ENCODE measurements at regions of chr17 and their contacts with region 1.

Region 1: DNA sequence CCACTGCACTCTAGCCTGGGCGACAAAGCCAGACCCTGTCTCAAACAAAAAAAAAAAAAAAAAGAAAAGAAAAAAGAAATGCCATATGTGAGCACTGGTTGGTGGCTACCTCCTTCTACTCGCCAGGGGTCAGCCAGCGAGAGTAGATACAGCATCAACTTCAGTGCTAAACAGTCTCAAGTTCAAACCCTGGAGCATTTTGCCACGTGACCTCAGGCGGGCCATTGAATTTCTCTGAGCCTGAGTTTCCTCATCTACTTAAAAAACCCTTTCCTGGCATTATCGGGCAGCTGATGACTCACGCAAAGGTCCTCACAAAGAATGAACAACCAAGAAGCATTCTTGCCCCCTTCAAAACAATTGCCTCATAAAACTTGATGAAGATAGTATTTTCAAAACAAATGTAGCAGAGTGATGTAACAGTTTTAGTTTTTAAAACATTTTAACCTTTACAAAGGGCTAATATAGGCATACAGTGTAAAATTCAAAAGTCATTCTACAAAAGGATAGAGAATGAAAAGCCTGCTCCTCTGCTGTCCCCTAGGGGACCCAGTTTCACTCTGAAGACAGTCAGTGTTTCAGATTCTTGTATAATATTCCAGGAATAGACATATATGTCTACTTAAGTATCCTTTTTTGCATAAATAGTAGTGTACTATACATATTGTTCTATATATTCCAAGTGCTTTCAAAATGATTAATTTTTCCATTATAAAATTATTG is 28.4 kb downstream of the DNAH2 start:
- DNase-seq: no peak
- H3K4me3 ChIP-seq: no peak overlapping the region
- H3K27ac ChIP-seq: peak overlapping the region; percentile 13 to 61; a peak in 3 of 4 replicates
- H3K4me1 ChIP-seq: peaks cover 6 to 29% of the 10 kb centered on the region in 2 experiments; a peak in 2 of 4 replicates
- H3K27me3 ChIP-seq: no peaks in the 10 kb centered on the region
- CTCF ChIP-seq: peak; percentile 42; the same call in 1 of the 2 replicates
- EP300 ChIP-seq: no peak
- RAD21 ChIP-seq: no peak

Region 2: GRCh38 chr17:7583253-7584109 is 162.4 kb before region 1 on chr17 and contains the start of gene MPDU1:
- CTCF ChIA-PET with region 1: no interaction called
- POLR2A ChIA-PET with region 1: no interaction called
- DNase-seq: peak; percentile 93
- H3K4me3 ChIP-seq: peak within 1 kb of the TSS; percentile 65 to 73
- H3K27ac ChIP-seq: peak within 1 kb of the TSS; percentile 97 to 98
- H3K4me1 ChIP-seq: peaks cover 22 to 32% of the 10 kb centered on the region in 2 experiments; a peak in 3 of 4 replicates
- H3K27me3 ChIP-seq: no peaks in the 10 kb centered on the region
- CTCF ChIP-seq: no peak
- EP300 ChIP-seq: no peak
- RAD21 ChIP-seq: no peak
- polyA plus RNA-seq, gene MPDU1: 126 and 142 TPM in 2 replicates

Region 3: GRCh38 chr17:7729816-7730215 is 16.1 kb before region 1 on chr17:
- CTCF ChIA-PET with region 1: interaction called, 20 read pairs
- POLR2A ChIA-PET with region 1: no interaction called
- DNase-seq: no peak
- H3K4me3 ChIP-seq: no peak overlapping the region
- H3K27ac ChIP-seq: no peak overlapping the region
- H3K4me1 ChIP-seq: no peaks in the 10 kb centered on the region
- H3K27me3 ChIP-seq: no peaks in the 10 kb centered on the region
- CTCF ChIP-seq: no peak
- EP300 ChIP-seq: no peak
- RAD21 ChIP-seq: no peak

Region 4: GRCh38 chr17:7816926-7817642 is 71.2 kb after region 1 on chr17:
- CTCF ChIA-PET with region 1: interaction called, 76 read pairs
- POLR2A ChIA-PET with region 1: no interaction called
- DNase-seq: no peak
- H3K4me3 ChIP-seq: no peak overlapping the region
- H3K27ac ChIP-seq: no peak overlapping the region
- H3K4me1 ChIP-seq: peaks cover 0 to 8% of the 10 kb centered on the region in 2 experiments; a peak in 1 of 4 replicates
- H3K27me3 ChIP-seq: no peaks in the 10 kb centered on the region
- CTCF ChIP-seq: no peak
- EP300 ChIP-seq: no peak
- RAD21 ChIP-seq: no peak

Region 5: GRCh38 chr17:7834962-7835813 is 89.3 kb after region 1 on chr17:
- CTCF ChIA-PET with region 1: interaction called, 40 read pairs
- POLR2A ChIA-PET with region 1: interaction called, 5 read pairs
- DNase-seq: peak; percentile 92
- H3K4me3 ChIP-seq: peak overlapping the region; percentile 90 to 97
- H3K27ac ChIP-seq: peak overlapping the region; percentile 98 to 99
- H3K4me1 ChIP-seq: peaks cover 21 to 27% of the 10 kb centered on the region in 2 experiments
- H3K27me3 ChIP-seq: peaks cover 7% of the 10 kb centered on the region; the same call in 1 of the 2 replicates
- CTCF ChIP-seq: peak; percentile 77
- EP300 ChIP-seq: no peak; a peak in 2 of 4 replicates
- RAD21 ChIP-seq: peak; percentile 75

Region 6: DNA sequence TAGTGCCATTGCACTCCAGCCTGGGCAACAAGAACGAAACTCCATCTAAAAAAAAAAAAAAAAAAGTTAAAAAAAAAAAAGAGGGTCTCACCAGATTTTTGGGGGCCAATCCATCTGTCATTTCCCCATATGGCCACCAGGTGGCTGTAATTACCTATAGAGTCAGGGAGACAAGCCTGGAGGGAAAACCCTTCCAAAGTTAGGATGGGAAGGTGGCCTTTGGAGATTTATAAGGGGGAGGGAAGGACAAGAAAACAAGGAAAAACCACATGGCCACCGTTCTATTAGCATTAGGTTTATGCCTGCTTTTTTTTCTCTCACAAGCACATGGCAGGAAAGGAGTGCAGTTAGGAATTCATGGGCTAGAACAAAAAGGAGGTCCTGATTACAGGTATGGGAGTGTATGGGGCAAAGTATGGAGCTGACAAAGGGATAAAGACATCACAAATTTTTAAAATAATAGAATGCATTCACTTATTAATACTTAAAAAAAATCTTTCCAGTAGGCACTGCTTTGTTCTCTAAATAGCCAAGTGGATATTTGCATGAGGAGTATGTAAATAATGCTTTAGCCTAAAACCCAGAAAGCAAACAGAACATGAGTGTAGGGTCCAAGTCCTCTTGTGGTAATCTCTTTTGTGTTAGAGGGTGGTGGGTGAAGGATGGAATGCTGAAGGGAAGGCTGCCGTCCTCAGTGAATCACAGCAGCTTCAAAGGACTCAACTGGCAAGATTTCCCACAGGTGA is 117.0 kb after region 1 on chr17:
- CTCF ChIA-PET with region 1: interaction called, 10 read pairs
- POLR2A ChIA-PET with region 1: no interaction called
- DNase-seq: peak; percentile 71
- H3K4me3 ChIP-seq: no peak overlapping the region; a peak in 1 of 4 replicates
- H3K27ac ChIP-seq: peak overlapping the region in 1 of 2 experiments; percentile 39; a peak in 1 of 4 replicates
- H3K4me1 ChIP-seq: peaks cover 9 to 19% of the 10 kb centered on the region in 2 experiments; a peak in 2 of 4 replicates
- H3K27me3 ChIP-seq: no peaks in the 10 kb centered on the region
- CTCF ChIP-seq: peak; percentile 87
- EP300 ChIP-seq: no peak
- RAD21 ChIP-seq: peak; percentile 87

Measured in SK-N-SH (cell line).